T-cell (primary cell): ENCODE measurements at regions of chr15 and their contacts with region 1.

Region 1: DNA sequence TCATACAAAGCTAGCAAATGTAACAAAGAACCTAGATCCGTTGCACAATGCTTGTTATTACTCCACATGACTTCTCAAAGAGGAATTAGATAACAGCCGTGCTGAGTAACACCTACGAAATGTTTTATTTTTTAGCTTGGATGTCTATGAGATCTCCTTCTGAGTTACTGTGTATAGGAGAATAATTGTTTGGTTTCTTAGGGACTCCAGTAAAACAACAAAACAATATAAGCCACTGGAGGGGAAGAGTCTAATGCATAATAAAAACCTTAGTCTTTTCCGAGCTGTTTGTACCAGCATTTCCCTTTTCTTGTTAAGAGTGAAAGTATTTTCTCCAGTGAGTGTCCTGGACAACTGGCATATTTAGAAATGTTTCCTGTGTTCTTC is 15.6 kb downstream of the SNAP23 start:
- DNase-seq: no peak
- ATAC-seq: no peak
- H3K4me3 ChIP-seq: no peak overlapping the region
- H3K4me3 Mint-ChIP-seq: no peak overlapping the region
- H3K27ac ChIP-seq: no peak overlapping the region
- H3K27ac Mint-ChIP-seq: no peak overlapping the region
- H3K4me1 ChIP-seq: no peaks in the 10 kb centered on the region
- H3K4me1 Mint-ChIP-seq: peaks cover 5 to 13% (median 6%) of the 10 kb centered on the region in 3 donors
- H3K27me3 ChIP-seq: no peaks in the 10 kb centered on the region
- H3K27me3 Mint-ChIP-seq: no peaks in the 10 kb centered on the region

Region 2: GRCh38 chr15:42528970-42529369 is 18.0 kb after region 1 on chr15:
- CTCF ChIA-PET with region 1: no interaction called
- POLR2A ChIA-PET with region 1: no interaction called
- DNase-seq: no peak
- ATAC-seq: no peak
- H3K4me3 ChIP-seq: no peak overlapping the region
- H3K4me3 Mint-ChIP-seq: no peak overlapping the region
- H3K27ac ChIP-seq: no peak overlapping the region
- H3K27ac Mint-ChIP-seq: no peak overlapping the region
- H3K4me1 ChIP-seq: no peaks in the 10 kb centered on the region
- H3K4me1 Mint-ChIP-seq: no peaks in the 10 kb centered on the region
- H3K27me3 ChIP-seq: no peaks in the 10 kb centered on the region
- H3K27me3 Mint-ChIP-seq: no peaks in the 10 kb centered on the region

Region 3: DNA sequence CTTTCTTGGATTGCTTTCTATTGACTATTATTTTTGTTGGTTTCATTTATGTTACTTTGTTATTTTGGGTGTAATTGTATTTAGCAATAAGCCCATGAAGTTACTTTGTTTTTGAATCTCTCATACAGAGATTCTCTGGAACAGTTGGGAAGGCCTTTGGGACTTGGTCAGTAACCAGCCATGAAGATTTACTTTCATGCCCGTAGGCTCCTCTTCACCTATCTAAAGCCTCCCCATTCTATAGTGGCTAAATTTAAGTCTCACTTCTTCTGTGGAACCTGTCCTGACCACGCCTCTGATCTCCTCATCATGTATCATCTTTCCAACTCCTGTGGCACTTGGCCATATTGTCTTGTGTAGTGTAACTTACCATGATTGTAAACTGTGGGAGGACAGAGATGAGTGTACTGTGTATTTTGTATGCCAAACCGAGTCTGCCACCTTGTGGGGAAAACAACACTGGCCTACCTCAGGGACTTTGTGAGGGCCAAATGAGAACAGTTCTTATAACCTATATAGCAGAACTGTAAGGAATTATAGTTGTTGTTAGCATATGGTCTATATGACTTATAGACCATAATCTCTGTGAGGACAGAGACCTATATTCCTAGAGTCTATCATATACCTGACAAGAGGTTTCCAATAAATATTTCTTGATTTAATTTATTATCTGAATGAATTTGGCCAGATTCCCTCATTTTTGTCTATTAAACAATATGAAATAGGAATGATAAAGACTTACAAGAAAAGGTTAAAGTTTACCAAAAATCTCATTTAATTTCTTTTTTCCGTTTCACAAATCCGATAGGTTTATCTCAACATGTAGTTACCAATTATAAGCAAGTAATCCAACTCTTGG is 139.4 kb after region 1 on chr15:
- CTCF ChIA-PET with region 1: no interaction called
- POLR2A ChIA-PET with region 1: interaction called in 1 of 2 experiments, 12 read pairs
- DNase-seq: peak in 34 of 35 experiments; percentile 20 to 72 (median 45)
- ATAC-seq: peak; percentile 75 to 85 (median 80)
- H3K4me3 ChIP-seq: no peak overlapping the region
- H3K4me3 Mint-ChIP-seq: no peak overlapping the region
- H3K27ac ChIP-seq: no peak overlapping the region
- H3K27ac Mint-ChIP-seq: no peak overlapping the region
- H3K4me1 ChIP-seq: no peaks in the 10 kb centered on the region
- H3K4me1 Mint-ChIP-seq: peaks cover 1 to 13% (median 6%) of the 10 kb centered on the region in 3 donors
- H3K27me3 ChIP-seq: no peaks in the 10 kb centered on the region
- H3K27me3 Mint-ChIP-seq: no peaks in the 10 kb centered on the region